ENCODE measurements at regions of chr2 and their contacts with region 1.

Region 1: GRCh38 chr2:85538486-85539360 is at the start of gene MAT2A:
- DNase-seq: peak; percentile 94
- H3K4me3 Mint-ChIP-seq: peak within 1 kb of the TSS; percentile 91
- H3K27ac Mint-ChIP-seq: peak within 1 kb of the TSS; percentile 99
- H3K4me1 Mint-ChIP-seq: peaks cover 36% of the 10 kb centered on the region
- H3K27me3 Mint-ChIP-seq: no peaks in the 10 kb centered on the region
- total RNA-seq, gene MAT2A: 221 to 228 TPM

Region 2: DNA sequence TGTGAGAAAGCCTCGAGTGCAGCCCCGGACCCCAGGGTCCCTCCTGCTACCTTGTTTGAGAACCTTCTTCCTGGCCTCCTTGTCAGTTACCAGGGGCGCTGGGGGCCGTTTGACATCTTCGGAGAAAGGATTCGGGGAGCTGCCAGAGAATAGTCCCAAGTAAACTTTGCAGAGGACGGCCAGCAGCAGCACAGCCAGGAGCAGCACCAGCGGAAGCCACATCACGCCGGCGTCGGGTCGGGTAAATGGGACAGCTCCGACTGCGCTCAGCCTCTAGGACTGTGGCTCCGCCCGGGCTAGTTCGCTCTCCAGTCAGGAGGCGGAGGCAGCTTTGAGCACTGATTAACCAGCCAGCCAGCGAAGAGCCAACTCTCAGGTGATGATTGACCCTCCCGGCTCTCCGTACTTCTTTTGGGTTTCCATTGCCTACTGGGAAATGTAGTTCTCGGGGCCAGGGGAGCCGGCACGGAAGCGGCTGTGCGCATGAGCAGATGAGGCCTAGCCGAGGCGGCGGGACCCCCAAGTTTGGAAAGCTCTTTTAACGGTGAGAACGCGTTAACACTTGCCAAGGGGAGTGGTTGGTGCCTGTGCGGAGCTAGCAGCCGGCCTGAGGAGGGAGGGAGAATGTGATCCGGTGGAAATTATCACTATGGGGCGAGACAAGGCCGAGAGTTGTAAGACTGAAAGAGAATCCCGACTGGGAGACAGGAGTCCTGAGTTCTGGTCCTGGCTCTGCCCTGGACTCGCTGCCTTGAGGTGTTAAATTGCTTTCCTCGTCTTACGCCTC is 184.2 kb before region 1 on chr2 and contains the starts of genes ELMOD3 and RETSAT:
- CTCF ChIA-PET with region 1: no interaction called
- intact Hi-C with region 1: loop called (anchors 1 kb)
- DNase-seq: peak; percentile 99
- H3K4me3 Mint-ChIP-seq: peak within 1 kb of the TSS; percentile 99
- H3K27ac Mint-ChIP-seq: peak within 1 kb of the TSS; percentile 96
- H3K4me1 Mint-ChIP-seq: peaks cover 36% of the 10 kb centered on the region
- H3K27me3 Mint-ChIP-seq: no peaks in the 10 kb centered on the region
- total RNA-seq, gene ELMOD3: 14.8 to 15.4 TPM
- total RNA-seq, gene RETSAT: 19.7 to 24.5 TPM

Region 3: DNA sequence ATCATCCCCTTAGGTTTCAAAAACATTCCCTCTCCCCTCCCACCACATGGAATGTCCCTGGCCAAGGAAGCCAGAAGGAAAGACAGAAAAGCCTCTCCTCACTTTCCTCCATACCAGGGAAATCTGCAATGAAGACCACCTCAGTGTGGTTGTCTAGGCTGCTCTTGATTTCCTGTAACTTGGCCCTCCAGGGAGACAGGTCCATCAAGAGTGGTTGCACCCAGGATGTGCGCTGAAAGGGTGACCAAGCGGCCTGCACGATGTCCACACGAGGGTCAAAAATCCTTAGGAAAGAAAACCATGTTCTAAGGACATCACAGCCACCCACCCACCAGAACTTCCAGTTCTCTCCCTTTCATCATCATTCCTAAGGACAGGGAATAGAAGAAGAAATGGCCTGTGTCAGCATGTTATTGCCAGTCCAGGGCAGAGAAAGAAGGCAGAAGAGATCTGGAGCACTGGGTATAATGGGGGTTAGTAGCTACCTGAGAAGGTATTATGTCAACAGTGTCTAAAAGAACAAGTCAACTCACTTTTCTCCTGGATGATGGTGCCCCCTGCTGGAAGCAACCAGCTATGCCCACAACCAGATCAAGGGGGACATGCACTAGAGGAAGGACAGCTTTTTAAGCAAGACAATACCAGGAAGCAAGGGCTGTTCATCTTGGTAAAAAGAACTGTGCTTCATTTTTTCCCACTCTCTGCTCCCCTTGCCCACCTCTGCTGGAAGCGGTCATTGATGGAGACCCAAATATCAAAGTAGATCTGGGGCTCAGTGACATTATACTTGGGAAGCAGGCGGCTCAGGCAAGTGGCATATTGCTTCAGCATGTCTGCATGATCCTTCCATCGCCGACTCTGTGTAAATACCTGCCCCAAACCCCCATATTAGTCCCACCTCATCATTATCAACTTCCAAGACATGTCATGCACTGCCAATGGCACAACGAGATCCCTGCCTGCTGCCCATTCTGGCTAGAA is 13.3 kb after region 1 on chr2:
- CTCF ChIA-PET with region 1: interaction called, 111 read pairs
- intact Hi-C with region 1: no loop called
- DNase-seq: peak; percentile 95
- H3K4me3 Mint-ChIP-seq: no peak overlapping the region
- H3K27ac Mint-ChIP-seq: no peak overlapping the region
- H3K4me1 Mint-ChIP-seq: peaks cover 2% of the 10 kb centered on the region
- H3K27me3 Mint-ChIP-seq: no peaks in the 10 kb centered on the region

Region 4: DNA sequence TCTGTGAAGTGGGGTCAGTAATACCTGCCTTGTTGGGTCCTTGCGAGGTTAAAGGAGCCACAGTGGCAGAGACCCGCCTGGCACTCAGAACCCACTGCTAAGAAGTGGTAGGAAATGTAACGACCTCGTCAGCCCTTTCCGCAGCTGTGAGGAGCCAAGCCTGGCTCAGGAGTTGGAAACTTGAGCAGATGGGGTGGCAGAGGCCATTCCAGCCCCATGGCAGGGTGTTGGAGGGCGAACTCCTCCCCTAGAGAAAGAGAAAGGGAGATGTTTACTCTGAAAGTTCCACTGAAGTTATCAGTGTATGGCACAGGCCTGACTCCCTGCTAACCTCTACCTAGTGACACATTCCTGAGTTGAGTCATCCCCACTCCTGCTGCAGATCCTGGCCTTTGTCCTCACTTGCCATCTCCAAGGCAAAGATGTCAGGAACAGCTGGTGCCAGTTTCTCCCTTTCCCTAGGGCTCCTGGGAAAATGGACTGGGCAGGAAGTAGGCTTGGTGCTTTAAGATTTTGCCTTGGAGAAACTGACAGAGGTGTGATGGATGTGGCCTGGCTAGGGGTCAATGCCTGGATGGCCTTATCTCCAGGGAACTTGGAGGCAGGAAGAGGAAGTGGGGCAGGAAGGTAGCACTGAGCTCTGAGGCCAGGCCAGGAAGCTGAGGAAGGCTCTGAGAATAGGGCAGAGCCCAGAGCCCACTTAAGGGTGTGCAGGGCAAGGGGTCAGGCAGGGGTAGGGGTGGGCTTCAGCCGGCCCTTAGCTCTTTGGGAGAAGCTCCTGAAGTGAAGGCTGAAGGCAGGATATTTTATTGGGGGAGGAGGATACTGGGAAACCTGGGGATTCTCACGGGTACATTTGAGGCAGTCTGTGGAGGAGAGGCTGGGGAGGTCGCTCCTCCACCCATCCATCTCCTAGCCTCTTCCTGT is 46.4 kb after region 1 on chr2:
- CTCF ChIA-PET with region 1: no interaction called
- intact Hi-C with region 1: loop called (anchors 2 kb)
- DNase-seq: peak; percentile 50
- H3K4me3 Mint-ChIP-seq: peak overlapping the region; percentile 79
- H3K27ac Mint-ChIP-seq: peak overlapping the region; percentile 83
- H3K4me1 Mint-ChIP-seq: peaks cover 40% of the 10 kb centered on the region
- H3K27me3 Mint-ChIP-seq: no peaks in the 10 kb centered on the region

Region 5: DNA sequence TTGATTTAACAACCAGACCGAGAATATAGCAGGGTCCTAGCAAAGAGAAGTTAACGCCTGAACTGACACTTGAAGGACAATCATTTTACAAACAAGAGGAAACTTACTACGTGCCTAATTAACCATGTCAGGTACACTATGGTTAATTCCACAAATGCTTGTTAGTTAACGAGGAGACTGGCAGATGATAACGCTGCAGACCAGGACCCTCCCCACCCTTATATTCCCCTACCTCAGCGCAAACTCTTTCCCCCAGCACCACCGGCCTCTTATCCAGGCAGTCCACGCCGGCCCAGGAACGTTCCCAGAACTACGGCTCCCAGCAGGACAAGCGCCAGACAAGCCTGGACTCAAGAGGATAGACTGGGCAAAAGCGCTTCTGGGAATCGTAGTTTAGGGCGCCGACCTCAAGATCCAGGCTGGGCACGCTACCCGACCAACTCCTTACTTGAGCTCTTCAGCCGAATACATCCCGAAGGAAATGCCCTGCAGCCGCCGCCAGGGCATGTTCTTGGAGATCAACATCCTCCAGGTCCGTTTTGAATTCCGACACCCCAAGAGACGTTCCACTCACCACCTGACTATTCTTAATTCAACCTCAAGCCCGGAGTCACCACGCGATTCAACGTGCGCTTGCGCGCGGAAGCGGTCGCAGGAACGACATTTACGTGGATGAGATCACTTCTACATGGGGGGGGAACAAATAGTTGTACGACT is 566.7 kb after region 1 on chr2 and contains the start of gene POLR1A:
- CTCF ChIA-PET with region 1: interaction called, 3 read pairs
- intact Hi-C with region 1: loop called (anchors 5 kb)
- DNase-seq: peak; percentile 87
- H3K4me3 Mint-ChIP-seq: peak within 1 kb of the TSS; percentile 89
- H3K27ac Mint-ChIP-seq: peak within 1 kb of the TSS; percentile 99
- H3K4me1 Mint-ChIP-seq: peaks cover 57% of the 10 kb centered on the region
- H3K27me3 Mint-ChIP-seq: no peaks in the 10 kb centered on the region
- total RNA-seq, gene POLR1A: 25.3 to 27.1 TPM

Measured in activated naive CD4-positive, alpha-beta T cell treated with anti-CD3 and anti-CD28 coated beads for 36 hours (primary cell).